ENCODE measurements at regions of chr5 and their contacts with region 1.

Region 1: GRCh38 chr5:159156426-159157238 is 52.7 kb downstream of the RNF145 start:
- DNase-seq: no peak
- H3K4me3 ChIP-seq: no peak overlapping the region
- H3K27ac ChIP-seq: no peak overlapping the region
- H3K4me1 ChIP-seq: no peaks in the 10 kb centered on the region
- H3K27me3 ChIP-seq: no peaks in the 10 kb centered on the region
- CTCF ChIP-seq: peak; percentile 37 to 82 (median 70)
- EP300 ChIP-seq: no peak
- POLR2A ChIP-seq: no peak

Region 2: DNA sequence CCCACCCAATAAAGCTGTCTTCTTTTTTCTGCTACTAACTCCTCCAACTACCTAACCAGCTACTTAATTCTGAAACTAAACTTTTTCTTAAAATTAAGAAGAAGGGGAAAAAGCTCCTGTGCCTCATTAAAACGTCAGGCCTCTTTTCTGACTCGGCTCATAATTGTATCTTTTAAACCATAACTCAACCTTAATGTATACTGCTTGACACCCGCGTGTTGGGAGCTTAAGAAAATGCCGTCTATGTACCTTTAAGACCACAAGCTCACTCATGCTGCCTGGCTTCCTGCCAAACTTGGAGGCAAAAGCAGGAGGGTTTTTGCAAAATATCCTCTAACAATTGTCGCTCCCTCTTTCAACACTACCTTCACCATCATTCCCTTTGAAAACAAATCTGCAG is 61.9 kb before region 1 on chr5:
- intact Hi-C with region 1: no loop called
- DNase-seq: peak; percentile 92
- H3K4me3 ChIP-seq: peak overlapping the region in 3 of 4 donors; percentile 49 to 59 (median 56)
- H3K27ac ChIP-seq: peak overlapping the region in 3 of 4 donors; percentile 32 to 81 (median 81)
- H3K4me1 ChIP-seq: peaks cover 0 to 27% (median 17%) of the 10 kb centered on the region in 4 donors
- H3K27me3 ChIP-seq: peaks cover 28 to 47% (median 37%) of the 10 kb centered on the region in 3 donors
- CTCF ChIP-seq: no peak
- EP300 ChIP-seq: no peak
- POLR2A ChIP-seq: no peak

Region 3: GRCh38 chr5:159262859-159263567 is 106.4 kb after region 1 on chr5 and contains the start of gene UBLCP1:
- intact Hi-C with region 1: loop called (anchors 2 kb)
- DNase-seq: peak; percentile 89
- H3K4me3 ChIP-seq: peak within 1 kb of the TSS; percentile 76 to 94 (median 92)
- H3K27ac ChIP-seq: peak within 1 kb of the TSS; percentile 87 to 89 (median 88)
- H3K4me1 ChIP-seq: peaks cover 0 to 21% (median 15%) of the 10 kb centered on the region in 4 donors
- H3K27me3 ChIP-seq: no peaks in the 10 kb centered on the region
- CTCF ChIP-seq: no peak
- EP300 ChIP-seq: peak in 2 of 4 donors; percentile 11 to 25
- POLR2A ChIP-seq: peak in 1 of 2 donors; percentile 34
- total RNA-seq, gene UBLCP1: 17.7 to 29.6 (median 19.8) TPM